Activated B cell treated with CpG ODN at 0.5 μM for 24 hours (primary cell): ENCODE measurements at regions of chr6 and their contacts with region 1.

Region 1: DNA sequence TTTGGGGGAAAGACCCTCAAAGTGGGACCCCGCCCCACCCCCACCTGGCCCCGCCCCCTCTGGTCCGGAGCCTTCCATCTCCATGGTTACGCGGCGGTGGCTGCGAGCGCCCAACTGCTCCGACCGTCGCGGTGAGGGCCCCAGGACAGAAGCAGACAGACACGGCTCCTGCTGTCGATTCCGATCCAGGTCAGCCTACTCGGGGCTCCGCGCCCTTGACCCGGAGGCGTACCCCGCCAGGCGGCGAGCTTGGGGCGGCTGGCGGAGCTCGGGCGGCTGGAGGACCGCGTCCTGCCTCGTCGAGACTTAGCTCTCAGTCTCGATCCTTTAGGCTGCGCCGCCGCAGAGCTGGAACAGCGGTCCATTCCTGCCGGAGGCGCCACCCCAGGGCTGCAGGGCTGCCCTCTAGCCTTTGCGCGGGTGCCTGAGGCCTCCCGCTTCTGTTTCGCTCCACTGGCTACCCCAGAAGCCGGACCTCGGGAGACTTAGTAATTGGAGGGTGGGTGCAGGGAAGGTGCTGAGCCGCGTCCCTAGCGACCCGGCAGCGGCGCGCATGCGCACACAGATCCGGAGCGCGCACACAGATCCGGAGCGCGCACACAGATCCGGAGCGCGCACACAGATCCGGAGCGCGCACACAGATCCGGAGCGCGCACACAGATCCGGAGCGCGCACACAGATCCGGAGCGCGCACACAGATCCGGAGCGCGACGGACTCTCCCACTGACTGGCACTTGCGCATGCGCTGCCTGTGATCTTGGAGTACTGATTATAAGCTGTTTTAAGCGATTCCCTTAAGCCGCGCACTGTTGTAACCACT is at the start of gene CFAP206:
- DNase-seq: peak; percentile 80
- ATAC-seq: peak; percentile 80
- H3K4me3 Mint-ChIP-seq: peak within 1 kb of the TSS; percentile 87
- H3K27ac Mint-ChIP-seq: peak within 1 kb of the TSS; percentile 79
- H3K4me1 Mint-ChIP-seq: peaks cover 9% of the 10 kb centered on the region
- H3K27me3 Mint-ChIP-seq: peaks cover 8% of the 10 kb centered on the region
- CTCF ChIP-seq: no peak
- total RNA-seq, gene CFAP206: 0.09 TPM in 1 of 2 replicates, not detected in the other

Region 2: GRCh38 chr6:87322304-87323212 is 85.6 kb before region 1 on chr6 and contains the start of gene SMIM8:
- CTCF ChIA-PET with region 1: no interaction called
- POLR2A ChIA-PET with region 1: no interaction called
- intact Hi-C with region 1: loop called (anchors 1 kb)
- DNase-seq: peak; percentile 89
- ATAC-seq: peak; percentile 100
- H3K4me3 Mint-ChIP-seq: peak within 1 kb of the TSS; percentile 98
- H3K27ac Mint-ChIP-seq: peak within 1 kb of the TSS; percentile 90
- H3K4me1 Mint-ChIP-seq: peaks cover 25% of the 10 kb centered on the region
- H3K27me3 Mint-ChIP-seq: no peaks in the 10 kb centered on the region
- CTCF ChIP-seq: peak; percentile 79
- total RNA-seq, gene SMIM8: 11.1 and 14.4 TPM in 2 replicates

Region 3: GRCh38 chr6:87366072-87366827 is 41.9 kb before region 1 on chr6:
- CTCF ChIA-PET with region 1: no interaction called
- POLR2A ChIA-PET with region 1: no interaction called
- intact Hi-C with region 1: loop called (anchors 1 kb)
- DNase-seq: no peak
- ATAC-seq: no peak
- H3K4me3 Mint-ChIP-seq: no peak overlapping the region
- H3K27ac Mint-ChIP-seq: no peak overlapping the region
- H3K4me1 Mint-ChIP-seq: no peaks in the 10 kb centered on the region
- H3K27me3 Mint-ChIP-seq: no peaks in the 10 kb centered on the region
- CTCF ChIP-seq: no peak

Region 4: GRCh38 chr6:87393022-87393622 is 15.0 kb before region 1 on chr6:
- CTCF ChIA-PET with region 1: interaction called, 11 read pairs
- POLR2A ChIA-PET with region 1: interaction called, 4 read pairs
- intact Hi-C with region 1: loop called (anchors 1 kb)
- DNase-seq: no peak
- ATAC-seq: peak; percentile 94
- H3K4me3 Mint-ChIP-seq: no peak overlapping the region
- H3K27ac Mint-ChIP-seq: no peak overlapping the region
- H3K4me1 Mint-ChIP-seq: peaks cover 5% of the 10 kb centered on the region
- H3K27me3 Mint-ChIP-seq: no peaks in the 10 kb centered on the region
- CTCF ChIP-seq: peak; percentile 53